ENCODE measurements at regions of chr5 and their contacts with region 1.

Region 1: DNA sequence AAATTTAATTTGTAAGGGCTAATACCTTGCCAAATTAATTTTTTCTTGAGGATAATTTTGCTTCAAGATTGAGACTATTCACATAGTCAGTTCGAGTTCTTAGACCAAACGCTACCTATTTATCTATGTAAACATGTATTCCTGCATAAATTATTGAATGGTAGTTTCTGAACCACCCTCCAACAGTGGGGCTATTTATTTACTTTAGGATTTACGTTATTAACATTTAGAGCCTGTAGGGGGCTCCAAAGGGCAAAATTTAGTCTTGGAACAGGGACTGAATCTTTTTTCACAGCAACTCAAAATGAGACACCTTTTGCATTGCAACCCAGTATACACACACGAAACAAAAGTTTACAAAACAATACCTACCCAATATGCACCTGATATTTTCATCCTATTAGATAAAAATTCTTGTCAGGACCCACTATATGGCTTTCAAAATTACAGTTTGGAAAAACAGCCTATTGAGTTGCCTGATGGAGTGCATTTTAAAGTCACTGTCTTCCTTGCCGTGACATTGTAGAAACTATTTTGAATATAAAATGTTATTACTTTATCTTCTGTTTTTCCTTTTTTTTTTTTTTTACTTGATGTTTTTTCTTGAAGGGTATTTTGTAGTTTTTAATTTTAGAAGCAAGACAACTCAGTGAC is 47.1 kb upstream of the POU4F3 start:
- DNase-seq: no peak
- ATAC-seq: peak; percentile 27 to 54

Region 2: GRCh38 chr5:146213210-146213826 is 78.2 kb before region 1 on chr5:
- intact Hi-C with region 1: no loop called
- DNase-seq: no peak
- ATAC-seq: no peak

Region 3: DNA sequence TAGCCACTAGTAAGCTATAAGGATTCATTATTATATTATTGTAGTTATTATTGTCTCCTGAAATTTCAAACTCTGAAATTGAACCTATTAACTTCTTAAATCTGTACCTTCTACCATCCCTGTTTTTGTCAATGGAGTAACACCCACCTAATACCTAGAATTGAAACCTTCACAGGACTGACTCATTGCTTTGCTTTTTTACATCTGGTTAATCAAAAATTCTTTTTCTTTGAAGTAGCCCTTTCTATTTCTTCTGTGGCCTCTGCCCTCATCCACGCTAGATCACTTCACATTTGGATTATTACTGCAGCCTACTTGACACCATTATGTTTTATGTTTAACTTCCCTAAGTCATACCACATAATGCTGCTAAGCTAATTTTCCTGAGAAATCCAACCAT is 52.6 kb before region 1 on chr5:
- intact Hi-C with region 1: no loop called
- DNase-seq: no peak
- ATAC-seq: no peak

Region 4: DNA sequence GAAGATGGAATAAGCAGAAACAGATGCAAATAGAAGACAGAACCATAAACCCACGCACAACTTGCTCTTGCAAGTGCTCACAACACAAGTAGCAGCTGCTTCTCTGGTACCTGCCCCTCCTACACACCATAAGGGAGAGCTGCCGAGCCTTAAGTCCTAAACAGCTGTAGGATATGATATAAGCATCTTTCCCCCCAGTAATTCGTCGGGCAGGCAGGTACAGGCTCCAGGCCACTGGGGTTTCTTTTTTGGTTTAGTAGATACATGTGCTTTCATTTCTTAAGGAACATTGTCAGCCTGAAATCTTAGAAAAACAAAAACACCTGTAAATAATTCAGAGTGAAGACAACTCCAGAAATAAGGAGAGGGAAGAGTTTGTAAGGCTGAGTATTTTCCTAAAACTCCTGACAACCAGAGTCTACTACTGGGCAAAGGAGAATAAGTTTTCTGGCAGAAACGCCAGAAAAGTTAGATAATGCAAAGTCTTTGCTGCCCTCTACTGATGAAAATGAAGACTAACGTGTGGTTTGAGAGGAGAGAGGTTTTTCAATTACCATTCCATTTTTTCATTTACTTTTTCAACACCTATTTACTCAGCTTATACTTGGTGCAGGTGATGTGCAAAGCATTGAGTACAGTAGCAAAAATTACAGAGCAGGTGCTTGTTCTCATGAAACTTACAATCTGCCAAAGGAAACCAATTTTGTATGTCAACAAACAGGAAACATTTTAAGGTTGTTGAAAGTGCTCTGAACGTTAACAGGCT is 135.5 kb after region 1 on chr5:
- intact Hi-C with region 1: loop called (anchors 1 to 5 kb)
- DNase-seq: no peak
- ATAC-seq: peak; percentile 50 to 67